AG04449 (cell line): ENCODE measurements at regions of chr14 and their contacts with region 1.

Region 1: DNA sequence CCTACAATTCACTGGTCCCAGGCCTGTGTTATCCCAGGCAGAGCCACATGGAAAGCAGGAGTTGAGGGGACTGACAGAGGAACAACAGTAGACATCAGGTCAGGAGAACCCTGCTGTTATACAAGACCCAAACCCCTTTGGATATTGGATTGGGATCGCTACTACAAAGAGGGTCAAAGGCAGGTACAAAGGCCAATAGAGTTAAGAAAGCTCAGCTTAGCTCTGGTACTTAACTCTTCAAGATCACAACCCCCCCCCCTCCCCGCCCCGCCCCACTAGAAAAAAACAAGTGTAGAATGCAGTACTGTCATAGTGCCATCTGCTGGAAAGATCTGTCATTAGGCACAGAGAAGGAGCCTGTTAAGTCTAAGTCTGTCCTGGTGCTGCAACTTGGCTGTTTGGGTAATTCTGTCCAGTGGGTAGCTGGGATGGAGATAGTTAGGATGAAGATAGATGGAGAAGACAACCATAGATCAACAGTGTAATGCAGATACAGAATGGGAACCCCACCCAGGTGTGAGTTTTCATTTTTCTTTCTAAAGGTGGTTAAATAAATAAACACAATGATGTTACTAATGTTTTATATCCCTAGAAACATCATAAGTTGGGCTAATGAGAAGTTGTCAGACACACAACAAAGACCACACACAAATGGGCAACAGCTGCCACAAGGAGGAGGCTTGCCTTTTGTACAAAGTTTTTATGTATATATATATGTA is 17.2 kb downstream of the REM2 start:
- DNase-seq: no peak
- H3K4me3 ChIP-seq: no peak overlapping the region
- CTCF ChIP-seq: peak; percentile 72

Region 2: DNA sequence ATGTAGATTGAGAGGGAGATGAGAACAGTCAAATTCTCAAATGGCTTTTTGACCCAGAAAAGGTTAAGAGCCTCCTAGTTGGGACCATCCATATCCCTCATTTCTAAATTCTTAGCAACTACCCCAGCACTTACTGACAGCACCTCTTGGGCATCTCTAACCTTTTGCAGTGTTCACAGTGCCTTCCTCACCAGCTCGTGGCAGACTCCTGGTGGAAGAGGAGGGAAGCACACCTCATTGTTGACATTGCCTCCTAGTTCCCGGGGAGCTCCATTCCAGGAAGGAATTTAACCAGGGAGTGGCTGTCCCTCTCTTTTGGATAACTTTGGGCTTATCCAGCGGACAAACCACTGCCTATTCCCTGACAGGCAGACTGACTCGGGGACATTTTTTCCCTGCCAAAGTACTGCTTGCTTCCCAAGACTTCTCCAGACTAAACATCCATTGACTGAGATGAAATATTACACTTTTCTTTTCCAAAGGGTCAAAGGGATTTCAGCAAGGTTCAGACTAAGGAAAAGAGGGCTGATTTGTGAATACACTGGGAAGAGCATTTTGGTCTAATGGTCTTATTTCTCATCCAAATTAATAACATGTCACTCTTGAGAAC is 247.1 kb before region 1 on chr14:
- CTCF ChIA-PET with region 1: interaction called, 11 read pairs
- POLR2A ChIA-PET with region 1: no interaction called
- DNase-seq: no peak
- H3K4me3 ChIP-seq: no peak overlapping the region
- CTCF ChIP-seq: peak; percentile 94

Region 3: GRCh38 chr14:22781586-22781991 is 118.7 kb before region 1 on chr14:
- CTCF ChIA-PET with region 1: interaction called, 23 read pairs
- POLR2A ChIA-PET with region 1: no interaction called
- DNase-seq: no peak
- H3K4me3 ChIP-seq: no peak overlapping the region
- CTCF ChIP-seq: no peak

Region 4: DNA sequence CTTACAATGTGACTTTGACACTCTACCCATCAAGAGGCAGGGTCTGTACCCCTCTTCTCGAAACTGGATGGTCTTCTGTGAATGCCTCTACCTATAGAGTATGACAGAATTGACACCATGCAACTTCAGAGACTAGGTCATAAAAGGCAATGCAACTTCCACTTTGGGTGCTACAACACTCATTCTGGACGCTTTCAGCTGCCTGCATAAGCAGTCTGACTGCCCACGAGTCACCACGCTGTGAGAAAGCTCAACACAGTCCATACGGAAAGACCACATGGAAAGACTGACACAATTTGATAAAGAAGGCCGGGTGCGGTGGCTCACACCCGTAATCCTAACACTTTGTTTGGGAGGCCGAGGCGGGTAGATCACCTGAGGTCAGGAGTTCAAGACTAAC is 99.9 kb before region 1 on chr14:
- CTCF ChIA-PET with region 1: no interaction called
- POLR2A ChIA-PET with region 1: no interaction called
- DNase-seq: no peak
- H3K4me3 ChIP-seq: no peak overlapping the region
- CTCF ChIP-seq: no peak

Region 5: GRCh38 chr14:22836301-22837113 is 63.7 kb before region 1 on chr14 and contains the start of gene MMP14:
- CTCF ChIA-PET with region 1: interaction called, 20 read pairs
- POLR2A ChIA-PET with region 1: no interaction called
- DNase-seq: no peak
- H3K4me3 ChIP-seq: peak within 1 kb of the TSS; percentile 90
- CTCF ChIP-seq: peak; percentile 58

Region 6: GRCh38 chr14:22886500-22887259 is 13.6 kb before region 1 on chr14:
- CTCF ChIA-PET with region 1: interaction called, 145 read pairs
- POLR2A ChIA-PET with region 1: interaction called, 8 read pairs
- DNase-seq: no peak
- H3K4me3 ChIP-seq: peak overlapping the region; percentile 57
- CTCF ChIP-seq: peak; percentile 32

Region 7: GRCh38 chr14:22929104-22929847 is 29.0 kb after region 1 on chr14 and contains the start of gene PRMT5:
- CTCF ChIA-PET with region 1: interaction called, 27 read pairs
- POLR2A ChIA-PET with region 1: no interaction called
- DNase-seq: peak; percentile 99
- H3K4me3 ChIP-seq: peak within 1 kb of the TSS; percentile 100
- CTCF ChIP-seq: no peak